ENCODE measurements at regions of chr5 and their contacts with region 1.

Region 1: DNA sequence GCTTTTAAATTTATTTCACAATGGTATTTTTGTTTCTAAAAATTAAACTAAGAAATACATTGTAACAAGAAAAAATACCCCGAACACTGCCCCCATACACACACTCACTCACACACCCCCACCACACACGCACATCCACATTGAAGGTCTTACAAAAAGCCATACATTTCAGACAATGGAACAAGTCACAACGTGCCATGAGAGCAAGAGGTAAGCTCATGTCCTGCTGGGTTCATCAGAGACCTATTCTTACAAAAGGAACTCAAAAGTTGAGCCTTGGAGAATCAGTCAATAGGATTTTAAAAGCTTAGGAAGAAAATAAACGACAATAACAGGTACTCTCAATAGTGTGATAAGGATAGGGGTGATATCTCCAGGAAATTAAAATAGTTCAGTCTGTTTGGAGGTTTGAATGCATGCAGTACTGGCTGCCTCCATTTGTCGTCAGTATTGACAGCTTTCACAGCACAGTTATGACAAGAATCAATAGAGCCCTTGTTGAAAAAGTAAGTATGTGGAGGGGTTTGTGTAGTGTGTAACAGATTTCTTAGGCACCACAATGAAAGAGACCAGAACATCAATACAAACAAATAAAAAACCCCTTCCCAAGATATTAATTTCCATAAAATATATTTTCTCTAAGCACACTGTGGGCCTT is 1826.2 kb upstream of the CDH6 start:
- DNase-seq: no peak
- H3K4me3 ChIP-seq: no peak overlapping the region
- H3K27ac ChIP-seq: no peak overlapping the region
- H3K4me1 ChIP-seq: no peaks in the 10 kb centered on the region
- H3K27me3 ChIP-seq: no peaks in the 10 kb centered on the region
- CTCF ChIP-seq: peak; percentile 54

Region 2: DNA sequence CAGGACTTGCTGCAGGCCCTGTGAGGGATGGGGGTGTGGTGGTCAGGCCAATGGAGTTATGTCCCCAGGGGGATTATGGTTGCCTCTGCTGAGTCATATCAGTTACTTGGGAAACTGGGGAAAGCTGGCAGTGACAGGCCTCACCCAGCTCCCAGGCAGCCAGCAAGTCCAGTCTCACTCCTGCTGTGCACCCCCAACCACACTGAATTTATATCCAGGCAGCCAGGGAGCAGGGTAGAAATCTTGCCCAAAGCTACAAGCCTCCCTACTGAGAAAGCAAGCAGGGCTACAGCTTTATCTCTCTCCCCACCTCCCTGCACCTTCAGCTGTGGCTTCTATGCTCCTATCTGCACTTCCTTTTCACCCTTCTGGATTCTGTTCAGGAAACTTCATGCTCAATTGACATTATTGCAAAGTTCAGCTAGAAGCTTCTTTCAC is 253.0 kb before region 1 on chr5:
- CTCF ChIA-PET with region 1: no interaction called
- POLR2A ChIA-PET with region 1: no interaction called
- intact Hi-C with region 1: no loop called
- DNase-seq: peak; percentile 39 to 68
- H3K4me3 ChIP-seq: no peak overlapping the region
- H3K27ac ChIP-seq: no peak overlapping the region
- H3K4me1 ChIP-seq: 0 out of 2 replicates have a peak, but pooled peaks cover 6% of the 10 kb centered on the region
- H3K27me3 ChIP-seq: no peaks in the 10 kb centered on the region
- CTCF ChIP-seq: no peak

Region 3: DNA sequence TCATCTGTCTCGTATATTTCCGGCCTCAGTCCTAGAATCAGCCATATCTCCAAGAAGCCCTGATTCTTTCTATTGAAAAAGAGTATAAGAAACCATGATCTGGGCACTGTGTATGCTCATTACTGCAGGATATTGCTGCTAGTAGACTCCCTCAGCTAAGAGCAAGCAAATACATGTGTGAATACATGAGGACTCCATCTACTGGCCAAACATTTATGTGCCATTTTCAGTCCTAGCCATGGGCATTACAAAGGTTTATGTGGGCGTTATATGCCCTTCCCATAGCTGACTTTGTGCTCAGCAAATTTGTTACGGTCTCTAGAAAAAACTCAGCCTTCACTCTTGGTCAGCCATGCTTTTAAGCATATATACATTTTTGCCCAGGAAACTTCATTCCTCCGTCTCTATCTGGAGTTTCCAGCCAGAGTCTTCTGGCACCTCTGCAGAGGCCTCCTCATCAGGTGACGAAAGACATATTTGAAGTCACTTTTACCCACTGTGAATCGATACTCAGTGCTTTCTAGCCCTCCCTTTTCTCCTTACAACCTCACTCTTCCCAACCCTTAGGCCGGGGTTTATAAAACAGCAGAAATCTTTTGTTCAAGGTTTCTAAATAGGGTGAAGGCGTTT is 330.6 kb after region 1 on chr5:
- CTCF ChIA-PET with region 1: interaction called, 6 read pairs
- POLR2A ChIA-PET with region 1: no interaction called
- intact Hi-C with region 1: loop called (anchors 5 kb)
- DNase-seq: no peak
- H3K4me3 ChIP-seq: no peak overlapping the region
- H3K27ac ChIP-seq: no peak overlapping the region
- H3K4me1 ChIP-seq: no peaks in the 10 kb centered on the region
- H3K27me3 ChIP-seq: no peaks in the 10 kb centered on the region
- CTCF ChIP-seq: peak; percentile 49; the same call in 1 of the 2 replicates